ENCODE measurements at regions of chr16 and their contacts with region 1.

Region 1: GRCh38 chr16:68348645-68349378 is 38.0 kb downstream of the PRMT7 start:
- DNase-seq: no peak
- H3K4me3 ChIP-seq: no peak overlapping the region
- H3K27ac ChIP-seq: no peak overlapping the region
- H3K4me1 ChIP-seq: peaks cover 4% of the 10 kb centered on the region
- H3K27me3 ChIP-seq: no peaks in the 10 kb centered on the region
- CTCF ChIP-seq: no peak

Region 2: DNA sequence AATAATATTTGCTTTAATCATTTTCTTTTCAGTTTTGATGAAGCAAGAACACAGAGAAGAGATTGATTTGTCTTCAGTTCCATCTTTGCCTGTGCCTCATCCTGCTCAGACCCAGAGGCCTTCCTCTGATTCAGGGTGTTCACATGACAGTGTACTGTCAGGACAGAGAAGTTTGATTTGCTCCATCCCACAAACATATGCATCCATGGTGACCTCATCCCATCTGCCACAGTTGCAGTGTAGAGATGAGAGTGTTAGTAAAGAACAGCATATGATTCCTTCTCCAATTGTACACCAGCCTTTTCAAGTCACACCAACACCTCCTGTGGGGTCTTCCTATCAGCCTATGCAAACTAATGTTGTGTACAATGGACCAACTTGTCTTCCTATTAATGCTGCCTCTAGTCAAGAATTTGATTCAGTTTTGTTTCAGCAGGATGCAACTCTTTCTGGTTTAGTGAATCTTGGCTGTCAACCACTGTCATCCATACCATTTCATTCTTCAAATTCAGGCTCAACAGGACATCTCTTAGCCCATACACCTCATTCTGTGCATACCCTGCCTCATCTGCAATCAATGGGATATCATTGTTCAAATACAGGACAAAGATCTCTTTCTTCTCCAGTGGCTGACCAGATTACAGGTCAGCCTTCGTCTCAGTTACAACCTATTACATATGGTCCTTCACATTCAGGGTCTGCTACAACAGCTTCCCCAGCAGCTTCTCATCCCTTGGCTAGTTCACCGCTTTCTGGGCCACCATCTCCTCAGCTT is 157.9 kb before region 1 on chr16:
- CTCF ChIA-PET with region 1: interaction called, 13 read pairs
- dilution Hi-C with region 1: no loop called
- in situ Hi-C with region 1: no loop called
- intact Hi-C with region 1: no loop called
- DNase-seq: no peak
- H3K4me3 ChIP-seq: no peak overlapping the region
- H3K27ac ChIP-seq: no peak overlapping the region
- H3K4me1 ChIP-seq: no peaks in the 10 kb centered on the region
- H3K27me3 ChIP-seq: no peaks in the 10 kb centered on the region
- CTCF ChIP-seq: no peak